Caco-2 (cell line): ENCODE measurements at regions of chr7 and their contacts with region 1.

Region 1: GRCh38 chr7:39073432-39073831 is 95.7 kb downstream of the POU6F2 start:
- DNase-seq: peak; percentile 51 to 55
- H3K4me3 ChIP-seq: no peak overlapping the region
- H3K4me3 Mint-ChIP-seq: peak overlapping the region; percentile 56
- H3K27ac Mint-ChIP-seq: peak overlapping the region; percentile 57
- H3K4me1 ChIP-seq: peaks cover 16% of the 10 kb centered on the region; the same call in 1 of the 2 replicates
- H3K4me1 Mint-ChIP-seq: peaks cover 15% of the 10 kb centered on the region
- H3K27me3 ChIP-seq: no peaks in the 10 kb centered on the region
- H3K27me3 Mint-ChIP-seq: no peaks in the 10 kb centered on the region
- CTCF ChIP-seq: no peak

Region 2: GRCh38 chr7:38748056-38748611 is 325.3 kb before region 1 on chr7:
- CTCF ChIA-PET with region 1: no interaction called
- POLR2A ChIA-PET with region 1: no interaction called
- intact Hi-C with region 1: no loop called
- DNase-seq: peak in 1 of 2 experiments; percentile 13
- H3K4me3 ChIP-seq: no peak overlapping the region
- H3K4me3 Mint-ChIP-seq: no peak overlapping the region
- H3K27ac Mint-ChIP-seq: no peak overlapping the region
- H3K4me1 ChIP-seq: no peaks in the 10 kb centered on the region
- H3K4me1 Mint-ChIP-seq: no peaks in the 10 kb centered on the region
- H3K27me3 ChIP-seq: no peaks in the 10 kb centered on the region
- H3K27me3 Mint-ChIP-seq: no peaks in the 10 kb centered on the region
- CTCF ChIP-seq: peak; percentile 54 to 55

Region 3: DNA sequence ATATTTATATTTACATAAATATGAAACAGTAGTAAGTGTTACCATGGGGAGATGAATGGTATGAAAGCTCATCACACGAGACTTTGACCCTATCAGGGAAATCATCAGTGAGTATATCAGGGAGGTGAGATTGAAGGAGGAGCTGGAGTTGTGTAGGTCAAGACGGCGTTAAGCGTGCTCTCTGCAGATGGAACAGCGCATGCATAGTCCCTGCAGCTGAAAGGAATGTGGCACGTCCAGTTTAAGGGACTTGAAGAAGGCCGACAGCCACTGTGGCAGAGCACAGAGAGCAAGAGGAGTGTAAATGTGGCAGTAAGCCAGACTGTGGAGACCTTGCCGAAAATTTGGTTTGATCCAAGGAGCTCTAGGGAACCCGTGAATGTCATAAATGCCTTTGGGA is 56.8 kb before region 1 on chr7:
- CTCF ChIA-PET with region 1: no interaction called
- POLR2A ChIA-PET with region 1: no interaction called
- intact Hi-C with region 1: loop called (anchors 2 kb)
- DNase-seq: peak; percentile 87 to 94
- H3K4me3 ChIP-seq: no peak overlapping the region
- H3K4me3 Mint-ChIP-seq: peak overlapping the region; percentile 64
- H3K27ac Mint-ChIP-seq: peak overlapping the region; percentile 89
- H3K4me1 ChIP-seq: peaks cover 18% of the 10 kb centered on the region
- H3K4me1 Mint-ChIP-seq: peaks cover 28% of the 10 kb centered on the region
- H3K27me3 ChIP-seq: no peaks in the 10 kb centered on the region
- H3K27me3 Mint-ChIP-seq: no peaks in the 10 kb centered on the region
- CTCF ChIP-seq: no peak

Region 4: DNA sequence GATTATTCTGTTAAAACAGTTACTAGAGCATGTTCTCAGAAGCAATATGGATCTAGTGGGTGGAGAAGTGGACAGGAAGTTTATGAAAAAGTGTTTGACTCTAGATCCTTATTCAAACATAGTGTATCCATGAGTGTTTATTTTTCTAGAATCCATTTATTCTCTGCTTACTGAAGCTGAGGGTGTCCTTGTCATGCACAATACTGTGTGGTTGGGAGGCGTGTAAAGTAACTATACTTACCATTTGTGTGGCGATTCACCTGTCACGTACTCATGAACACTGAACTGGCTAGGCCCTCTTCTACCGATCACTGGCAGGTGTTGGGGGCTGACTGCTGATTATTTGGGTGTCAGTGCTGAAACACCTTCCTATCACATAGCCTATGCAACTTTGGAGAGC is 21.7 kb before region 1 on chr7:
- CTCF ChIA-PET with region 1: no interaction called
- POLR2A ChIA-PET with region 1: no interaction called
- intact Hi-C with region 1: loop called (anchors 2 kb)
- DNase-seq: no peak
- H3K4me3 ChIP-seq: no peak overlapping the region
- H3K4me3 Mint-ChIP-seq: no peak overlapping the region
- H3K27ac Mint-ChIP-seq: no peak overlapping the region
- H3K4me1 ChIP-seq: peaks cover 16% of the 10 kb centered on the region
- H3K4me1 Mint-ChIP-seq: peaks cover 17% of the 10 kb centered on the region
- H3K27me3 ChIP-seq: no peaks in the 10 kb centered on the region
- H3K27me3 Mint-ChIP-seq: no peaks in the 10 kb centered on the region
- CTCF ChIP-seq: no peak

Region 5: GRCh38 chr7:39085590-39086049 is 12.2 kb after region 1 on chr7:
- CTCF ChIA-PET with region 1: no interaction called
- POLR2A ChIA-PET with region 1: no interaction called
- intact Hi-C with region 1: no loop called
- DNase-seq: no peak
- H3K4me3 ChIP-seq: no peak overlapping the region
- H3K4me3 Mint-ChIP-seq: peak overlapping the region; percentile 25
- H3K27ac Mint-ChIP-seq: no peak overlapping the region
- H3K4me1 ChIP-seq: no peaks in the 10 kb centered on the region
- H3K4me1 Mint-ChIP-seq: peaks cover 8% of the 10 kb centered on the region
- H3K27me3 ChIP-seq: no peaks in the 10 kb centered on the region
- H3K27me3 Mint-ChIP-seq: peaks cover 6% of the 10 kb centered on the region
- CTCF ChIP-seq: no peak